ENCODE measurements at regions of chr12 and their contacts with region 1.

Region 1: GRCh38 chr12:29463198-29463597 is 34.3 kb downstream of the OVCH1 start:
- DNase-seq: no peak
- ATAC-seq: no peak
- H3K4me3 ChIP-seq: no peak overlapping the region
- H3K27ac ChIP-seq: no peak overlapping the region
- H3K4me1 ChIP-seq: no peaks in the 10 kb centered on the region
- H3K27me3 ChIP-seq: peaks cover 7% of the 10 kb centered on the region; the same call in 1 of the 2 replicates
- CTCF ChIP-seq: no peak

Region 2: GRCh38 chr12:29334937-29335336 is 128.3 kb before region 1 on chr12:
- CTCF ChIA-PET with region 1: no interaction called
- POLR2A ChIA-PET with region 1: no interaction called
- intact Hi-C with region 1: no loop called
- DNase-seq: no peak
- ATAC-seq: no peak
- H3K4me3 ChIP-seq: no peak overlapping the region
- H3K27ac ChIP-seq: no peak overlapping the region
- H3K4me1 ChIP-seq: no peaks in the 10 kb centered on the region
- H3K27me3 ChIP-seq: no peaks in the 10 kb centered on the region
- CTCF ChIP-seq: no peak

Region 3: DNA sequence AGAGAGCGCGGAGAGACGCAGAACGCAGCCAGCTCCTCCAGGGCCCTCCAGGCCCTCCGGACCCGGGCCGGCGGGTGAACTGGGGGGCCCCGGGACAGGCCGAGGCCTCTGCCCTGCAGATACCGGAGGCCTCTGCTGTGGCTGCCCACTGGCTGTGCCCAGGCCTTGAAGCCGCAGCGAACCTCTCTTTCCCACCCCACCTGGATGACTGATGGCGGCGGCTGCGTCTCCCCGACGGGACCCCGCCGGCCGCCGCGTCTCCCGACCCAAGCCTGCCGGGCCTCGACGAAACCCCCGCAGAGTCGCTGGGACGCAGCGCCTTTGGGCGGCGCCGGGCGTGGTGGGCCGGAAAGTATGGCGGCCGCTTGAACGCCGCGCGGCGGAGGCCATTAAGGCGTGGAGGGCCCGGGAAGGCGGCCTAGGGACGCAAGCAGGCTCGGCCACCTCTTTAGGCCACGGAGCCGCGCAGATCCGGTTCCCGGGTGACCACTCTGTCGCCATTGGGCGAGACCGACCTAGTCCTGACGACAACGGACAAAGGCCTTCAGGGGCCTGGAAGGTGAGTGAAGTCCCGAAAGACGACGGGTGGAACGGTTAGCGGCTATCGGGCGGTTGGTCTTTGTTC is 73.8 kb before region 1 on chr12:
- CTCF ChIA-PET with region 1: no interaction called
- POLR2A ChIA-PET with region 1: no interaction called
- intact Hi-C with region 1: no loop called
- DNase-seq: no peak
- ATAC-seq: no peak
- H3K4me3 ChIP-seq: no peak overlapping the region
- H3K27ac ChIP-seq: no peak overlapping the region
- H3K4me1 ChIP-seq: 0 out of 2 replicates have a peak, but pooled peaks cover 7% of the 10 kb centered on the region
- H3K27me3 ChIP-seq: no peaks in the 10 kb centered on the region
- CTCF ChIP-seq: no peak

Region 4: DNA sequence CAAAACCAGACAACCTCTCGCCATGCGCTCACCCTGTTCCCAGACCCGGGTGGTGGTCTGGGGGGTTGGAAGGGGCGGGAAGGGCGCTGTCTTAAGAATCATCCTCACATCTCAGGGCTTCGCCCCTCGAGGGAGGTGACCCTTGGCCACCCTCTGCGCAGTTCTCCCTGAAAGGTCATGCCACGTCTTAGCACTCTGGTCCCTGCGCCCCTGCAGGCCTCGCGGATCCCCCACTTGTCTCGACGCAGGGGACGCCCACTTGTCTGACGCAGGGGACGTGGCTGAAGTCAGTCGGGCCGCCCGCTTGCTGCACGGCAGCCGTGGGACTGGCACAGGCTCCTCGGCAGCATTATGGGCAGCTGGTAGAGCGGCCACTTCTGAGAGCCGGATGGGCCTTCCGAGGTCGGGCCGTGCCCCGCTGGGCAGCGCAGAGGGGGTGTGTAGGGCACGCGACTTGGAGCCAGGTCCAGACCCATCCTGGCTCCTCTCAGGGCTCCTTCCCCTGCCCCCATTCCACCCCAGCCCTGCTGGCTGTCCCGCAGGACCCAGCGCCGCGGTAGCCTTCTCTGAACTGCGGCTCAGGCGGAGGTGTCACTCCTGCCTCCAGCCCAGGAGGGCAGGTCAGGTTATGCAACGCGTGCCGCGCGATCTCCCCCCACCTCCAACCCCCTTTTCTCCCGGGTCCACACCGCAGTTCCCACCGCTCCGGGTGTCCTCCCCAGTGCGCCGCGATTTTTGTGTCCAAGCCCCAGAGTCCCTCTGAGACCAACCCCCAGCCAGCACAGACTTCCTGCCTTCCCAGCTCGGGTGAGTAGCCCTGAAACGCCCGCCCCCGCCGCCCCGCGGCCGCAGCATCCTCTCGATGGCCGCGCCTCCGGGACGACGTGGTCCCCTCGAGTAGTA is 1332.5 kb after region 1 on chr12:
- CTCF ChIA-PET with region 1: no interaction called
- POLR2A ChIA-PET with region 1: interaction called, 20 read pairs
- intact Hi-C with region 1: no loop called
- DNase-seq: peak; percentile 77
- ATAC-seq: peak; percentile 25
- H3K4me3 ChIP-seq: peak overlapping the region; percentile 80
- H3K27ac ChIP-seq: peak overlapping the region; percentile 100
- H3K4me1 ChIP-seq: peaks cover 58% of the 10 kb centered on the region
- H3K27me3 ChIP-seq: no peaks in the 10 kb centered on the region
- CTCF ChIP-seq: no peak